ENCODE measurements at regions of chr18 and their contacts with region 1.

Region 1: GRCh38 chr18:9474983-9475642 is at the start of gene RALBP1:
- DNase-seq: peak; percentile 100
- H3K4me3 ChIP-seq: peak within 1 kb of the TSS; percentile 71 to 99 (median 88)
- H3K27ac ChIP-seq: peak within 1 kb of the TSS; percentile 90 to 95 (median 92)
- H3K4me1 ChIP-seq: peaks cover 0 to 26% (median 14%) of the 10 kb centered on the region in 4 donors
- H3K27me3 ChIP-seq: no peaks in the 10 kb centered on the region
- CTCF ChIP-seq: no peak
- EP300 ChIP-seq: peak in 1 of 4 donors; percentile 8
- POLR2A ChIP-seq: peak; percentile 70 to 74
- total RNA-seq, gene RALBP1: 68.1 to 89.7 (median 86.6) TPM

Region 2: GRCh38 chr18:9516437-9517064 is 41.4 kb after region 1 on chr18:
- intact Hi-C with region 1: loop called (anchors 5 kb)
- DNase-seq: no peak
- H3K4me3 ChIP-seq: no peak overlapping the region
- H3K27ac ChIP-seq: peak overlapping the region in 2 of 4 donors; percentile 33 to 60
- H3K4me1 ChIP-seq: peaks cover 0 to 36% (median 15%) of the 10 kb centered on the region in 4 donors
- H3K27me3 ChIP-seq: no peaks in the 10 kb centered on the region
- CTCF ChIP-seq: peak; percentile 59 to 84 (median 78)
- EP300 ChIP-seq: no peak
- POLR2A ChIP-seq: no peak